ENCODE measurements at regions of chr10 and their contacts with region 1.

Region 1: DNA sequence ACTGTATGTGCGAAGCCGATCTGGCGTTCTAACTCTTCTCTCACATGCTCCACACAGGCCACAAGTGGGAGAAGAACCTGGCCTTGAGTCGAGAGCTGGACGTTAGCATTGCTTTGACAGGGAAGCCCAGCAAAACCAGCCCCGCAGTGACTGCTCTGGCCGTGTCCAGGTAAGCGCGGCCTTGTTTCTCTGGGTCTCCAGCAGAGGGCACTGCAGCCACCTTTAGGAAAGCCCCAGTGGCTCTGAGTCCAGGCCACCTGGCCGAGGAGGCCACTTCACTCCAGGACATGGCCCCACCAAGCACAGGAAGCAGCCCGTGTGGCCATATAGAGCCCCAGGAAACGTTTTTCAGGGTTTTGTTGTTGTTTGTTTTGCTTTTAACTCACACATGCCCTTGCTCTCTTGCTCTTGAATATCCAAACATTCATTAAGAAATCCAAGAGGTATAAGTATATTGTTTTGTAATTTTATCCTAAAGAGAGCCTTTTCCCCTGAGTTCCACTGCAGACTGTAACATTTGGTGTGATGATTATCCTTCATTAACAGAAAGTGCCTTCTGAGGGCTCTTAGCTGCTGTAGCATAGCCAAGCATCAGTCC is 41.8 kb upstream of the LRRC18 start:
- DNase-seq: peak; percentile 38 to 46
- ATAC-seq: peak; percentile 48 to 81 (median 59)
- H3K4me3 ChIP-seq: no peak overlapping the region
- H3K4me3 Mint-ChIP-seq: no peak overlapping the region
- H3K27ac ChIP-seq: no peak overlapping the region
- H3K27ac Mint-ChIP-seq: no peak overlapping the region
- H3K4me1 ChIP-seq: peaks cover 4% of the 10 kb centered on the region
- H3K4me1 Mint-ChIP-seq: no peaks in the 10 kb centered on the region
- H3K27me3 ChIP-seq: no peaks in the 10 kb centered on the region
- H3K27me3 Mint-ChIP-seq: no peaks in the 10 kb centered on the region
- CTCF ChIP-seq: peak; percentile 78

Region 2: GRCh38 chr10:49047128-49047639 is 65.8 kb after region 1 on chr10:
- intact Hi-C with region 1: no loop called
- DNase-seq: no peak
- ATAC-seq: no peak
- H3K4me3 ChIP-seq: no peak overlapping the region
- H3K4me3 Mint-ChIP-seq: no peak overlapping the region
- H3K27ac ChIP-seq: no peak overlapping the region
- H3K27ac Mint-ChIP-seq: no peak overlapping the region
- H3K4me1 ChIP-seq: peaks cover 6% of the 10 kb centered on the region
- H3K4me1 Mint-ChIP-seq: peaks cover 8 to 11% of the 10 kb centered on the region in 2 donors
- H3K27me3 ChIP-seq: no peaks in the 10 kb centered on the region
- H3K27me3 Mint-ChIP-seq: peaks cover 15 to 18% of the 10 kb centered on the region in 2 donors
- CTCF ChIP-seq: no peak

Region 3: DNA sequence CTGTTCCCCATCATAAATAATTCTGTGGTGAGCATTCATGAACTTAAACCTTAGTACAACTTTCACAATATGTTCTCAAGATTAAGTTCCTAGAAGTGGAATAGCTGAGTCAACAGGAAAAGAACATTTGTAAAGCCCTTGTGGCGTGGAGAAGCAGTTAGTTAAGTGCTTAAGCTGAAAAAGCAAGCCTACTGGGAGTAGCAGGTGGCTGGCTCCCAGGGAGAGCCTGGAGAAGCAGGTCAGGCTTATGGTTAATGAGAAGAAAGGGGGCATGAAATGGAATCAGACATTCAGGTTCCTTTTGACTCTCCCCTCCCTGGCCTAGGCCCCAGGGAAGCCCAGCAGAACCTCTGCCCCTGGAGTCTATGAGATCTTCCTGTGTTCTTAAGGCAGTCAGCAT is 98.7 kb after region 1 on chr10:
- intact Hi-C with region 1: no loop called
- DNase-seq: no peak
- ATAC-seq: no peak
- H3K4me3 ChIP-seq: no peak overlapping the region
- H3K4me3 Mint-ChIP-seq: no peak overlapping the region
- H3K27ac ChIP-seq: no peak overlapping the region
- H3K27ac Mint-ChIP-seq: no peak overlapping the region
- H3K4me1 ChIP-seq: peaks cover 6% of the 10 kb centered on the region
- H3K4me1 Mint-ChIP-seq: peaks cover 6% of the 10 kb centered on the region in 2 donors
- H3K27me3 ChIP-seq: no peaks in the 10 kb centered on the region
- H3K27me3 Mint-ChIP-seq: peaks cover 8 to 25% of the 10 kb centered on the region in 2 donors
- CTCF ChIP-seq: no peak

Region 4: DNA sequence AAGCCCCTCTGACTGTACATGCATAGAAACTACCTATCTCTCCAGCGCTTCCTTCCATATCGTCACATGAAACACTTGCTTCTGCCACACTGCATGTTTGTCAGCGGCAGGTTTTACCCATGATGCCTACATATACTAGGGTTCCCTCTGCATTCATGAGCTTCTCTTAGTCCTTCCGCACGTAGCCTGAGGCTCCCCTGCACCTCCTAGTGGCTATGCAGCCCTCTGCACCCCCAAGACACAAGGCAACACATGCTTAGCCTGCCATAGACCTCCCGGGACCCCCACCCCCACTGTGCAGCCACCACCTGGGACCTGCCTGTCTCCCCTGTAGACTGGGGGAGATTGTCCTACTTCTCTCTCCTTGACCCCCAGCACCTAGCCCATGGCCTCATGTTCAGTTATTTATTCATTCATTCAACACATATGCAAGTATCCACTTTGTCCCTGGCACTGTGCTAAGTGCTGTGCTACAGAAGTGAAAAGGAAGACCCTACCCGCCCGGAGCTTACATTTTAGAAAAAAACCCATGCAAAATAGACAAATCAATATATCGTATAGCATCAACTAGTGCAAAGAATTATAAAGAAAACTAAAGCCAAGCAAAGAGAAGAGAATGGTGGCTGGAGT is 183.3 kb after region 1 on chr10:
- intact Hi-C with region 1: loop called (anchors 1 kb)
- DNase-seq: peak; percentile 38 to 52
- ATAC-seq: peak; percentile 74 to 97 (median 95)
- H3K4me3 ChIP-seq: no peak overlapping the region
- H3K4me3 Mint-ChIP-seq: no peak overlapping the region
- H3K27ac ChIP-seq: no peak overlapping the region
- H3K27ac Mint-ChIP-seq: peak overlapping the region in 1 of 2 donors; percentile 16
- H3K4me1 ChIP-seq: peaks cover 7% of the 10 kb centered on the region
- H3K4me1 Mint-ChIP-seq: peaks cover 14 to 15% of the 10 kb centered on the region in 2 donors
- H3K27me3 ChIP-seq: no peaks in the 10 kb centered on the region
- H3K27me3 Mint-ChIP-seq: peaks cover 0 to 4% of the 10 kb centered on the region in 2 donors
- CTCF ChIP-seq: peak; percentile 71

Region 5: GRCh38 chr10:49419005-49419404 is 437.6 kb after region 1 on chr10:
- intact Hi-C with region 1: loop called (anchors 5 kb)
- DNase-seq: no peak
- ATAC-seq: no peak
- H3K4me3 ChIP-seq: no peak overlapping the region
- H3K4me3 Mint-ChIP-seq: no peak overlapping the region
- H3K27ac ChIP-seq: no peak overlapping the region
- H3K27ac Mint-ChIP-seq: no peak overlapping the region
- H3K4me1 ChIP-seq: no peaks in the 10 kb centered on the region
- H3K4me1 Mint-ChIP-seq: no peaks in the 10 kb centered on the region
- H3K27me3 ChIP-seq: no peaks in the 10 kb centered on the region
- H3K27me3 Mint-ChIP-seq: peaks cover 16 to 27% of the 10 kb centered on the region in 2 donors
- CTCF ChIP-seq: no peak

Region 6: GRCh38 chr10:49512121-49512809 is 530.9 kb after region 1 on chr10:
- intact Hi-C with region 1: loop called (anchors 1 kb)
- DNase-seq: peak in 1 of 2 donors; percentile 63
- ATAC-seq: peak; percentile 68 to 77 (median 76)
- H3K4me3 ChIP-seq: no peak overlapping the region
- H3K4me3 Mint-ChIP-seq: no peak overlapping the region
- H3K27ac ChIP-seq: no peak overlapping the region
- H3K27ac Mint-ChIP-seq: no peak overlapping the region
- H3K4me1 ChIP-seq: peaks cover 10% of the 10 kb centered on the region
- H3K4me1 Mint-ChIP-seq: peaks cover 17 to 29% of the 10 kb centered on the region in 2 donors
- H3K27me3 ChIP-seq: no peaks in the 10 kb centered on the region
- H3K27me3 Mint-ChIP-seq: no peaks in the 10 kb centered on the region
- CTCF ChIP-seq: peak; percentile 79

Measured in natural killer cell (primary cell).